Caco-2 (cell line): ENCODE measurements at regions of chr7 and their contacts with region 1.

Region 1: GRCh38 chr7:17706734-17707133 is 233.6 kb downstream of the SNX13 start:
- DNase-seq: peak; percentile 63 to 68
- H3K4me3 ChIP-seq: no peak overlapping the region
- H3K4me3 Mint-ChIP-seq: no peak overlapping the region
- H3K27ac Mint-ChIP-seq: no peak overlapping the region
- H3K4me1 ChIP-seq: no peaks in the 10 kb centered on the region
- H3K4me1 Mint-ChIP-seq: no peaks in the 10 kb centered on the region
- H3K27me3 ChIP-seq: peaks cover 1% of the 10 kb centered on the region; the same call in 1 of the 2 replicates
- H3K27me3 Mint-ChIP-seq: peaks cover 5% of the 10 kb centered on the region
- CTCF ChIP-seq: peak; percentile 78 to 80

Region 2: DNA sequence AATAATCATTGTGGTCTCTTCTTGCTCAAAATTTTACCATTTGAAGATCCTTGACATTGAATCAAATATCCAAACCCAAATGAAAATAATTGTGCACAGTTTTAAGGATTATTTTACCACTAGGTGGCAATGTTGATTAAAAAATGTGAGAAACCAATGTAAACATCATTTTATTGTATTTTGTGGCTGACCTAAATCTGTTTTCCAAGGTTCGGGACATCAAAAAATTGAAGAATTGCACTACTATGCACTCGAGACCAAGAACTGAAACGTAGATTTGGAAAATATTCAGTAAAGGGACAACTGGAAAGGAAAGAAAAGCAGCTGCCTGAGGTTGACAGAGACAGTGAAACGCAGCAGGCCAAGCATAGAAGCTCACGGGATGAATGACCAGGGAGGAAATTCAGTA is 25.8 kb before region 1 on chr7:
- CTCF ChIA-PET with region 1: interaction called, 4 read pairs
- POLR2A ChIA-PET with region 1: no interaction called
- intact Hi-C with region 1: loop called (anchors 1 kb)
- DNase-seq: peak in 1 of 2 experiments; percentile 15
- H3K4me3 ChIP-seq: no peak overlapping the region
- H3K4me3 Mint-ChIP-seq: no peak overlapping the region
- H3K27ac Mint-ChIP-seq: no peak overlapping the region
- H3K4me1 ChIP-seq: peaks cover 20% of the 10 kb centered on the region
- H3K4me1 Mint-ChIP-seq: peaks cover 10% of the 10 kb centered on the region
- H3K27me3 ChIP-seq: no peaks in the 10 kb centered on the region
- H3K27me3 Mint-ChIP-seq: no peaks in the 10 kb centered on the region
- CTCF ChIP-seq: peak; percentile 9 to 64

Region 3: GRCh38 chr7:17940302-17940883 is 233.7 kb after region 1 on chr7 and contains the start of gene SNX13:
- CTCF ChIA-PET with region 1: no interaction called
- POLR2A ChIA-PET with region 1: no interaction called
- intact Hi-C with region 1: loop called (anchors 10 kb)
- DNase-seq: peak; percentile 95 to 96
- H3K4me3 ChIP-seq: peak within 1 kb of the TSS; percentile 99
- H3K4me3 Mint-ChIP-seq: peak within 1 kb of the TSS; percentile 100
- H3K27ac Mint-ChIP-seq: peak within 1 kb of the TSS; percentile 100
- H3K4me1 ChIP-seq: 0 out of 2 replicates have a peak, but pooled peaks cover 8% of the 10 kb centered on the region
- H3K4me1 Mint-ChIP-seq: peaks cover 24% of the 10 kb centered on the region
- H3K27me3 ChIP-seq: no peaks in the 10 kb centered on the region
- H3K27me3 Mint-ChIP-seq: no peaks in the 10 kb centered on the region
- CTCF ChIP-seq: peak; percentile 25 to 27
- total RNA-seq, gene SNX13: 36.6 and 41.8 TPM in 2 replicates

Region 4: DNA sequence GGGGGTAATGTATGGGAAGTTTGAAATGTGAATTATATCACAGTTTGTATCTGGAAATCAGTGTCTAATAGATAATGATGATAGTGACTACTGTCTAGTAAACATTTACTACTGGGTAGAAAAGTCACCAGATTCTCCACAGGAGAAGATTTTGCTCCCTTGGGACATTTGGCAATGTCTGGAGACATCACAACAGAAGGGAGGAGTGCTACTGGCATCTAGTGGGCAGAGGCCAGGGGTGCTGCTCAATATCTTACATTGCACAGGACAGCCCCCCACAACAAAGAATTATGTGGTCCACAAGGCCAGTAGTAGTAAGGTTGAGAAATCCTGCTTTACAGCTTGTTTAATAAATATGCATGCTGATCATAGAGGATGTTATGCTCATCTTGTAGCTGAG is 413.3 kb after region 1 on chr7:
- CTCF ChIA-PET with region 1: no interaction called
- POLR2A ChIA-PET with region 1: no interaction called
- intact Hi-C with region 1: loop called (anchors 1 kb)
- DNase-seq: no peak
- H3K4me3 ChIP-seq: no peak overlapping the region
- H3K4me3 Mint-ChIP-seq: no peak overlapping the region
- H3K27ac Mint-ChIP-seq: no peak overlapping the region
- H3K4me1 ChIP-seq: no peaks in the 10 kb centered on the region
- H3K4me1 Mint-ChIP-seq: no peaks in the 10 kb centered on the region
- H3K27me3 ChIP-seq: no peaks in the 10 kb centered on the region
- H3K27me3 Mint-ChIP-seq: peaks cover 5% of the 10 kb centered on the region
- CTCF ChIP-seq: peak; percentile 14 to 17

Region 5: GRCh38 chr7:18320971-18321567 is 614.3 kb after region 1 on chr7:
- CTCF ChIA-PET with region 1: interaction called, 5 read pairs
- POLR2A ChIA-PET with region 1: no interaction called
- intact Hi-C with region 1: loop called (anchors 2 kb)
- DNase-seq: peak in 1 of 2 experiments; percentile 28
- H3K4me3 ChIP-seq: no peak overlapping the region
- H3K4me3 Mint-ChIP-seq: no peak overlapping the region
- H3K27ac Mint-ChIP-seq: no peak overlapping the region
- H3K4me1 ChIP-seq: no peaks in the 10 kb centered on the region
- H3K4me1 Mint-ChIP-seq: no peaks in the 10 kb centered on the region
- H3K27me3 ChIP-seq: no peaks in the 10 kb centered on the region; the same call in 1 of the 2 replicates
- H3K27me3 Mint-ChIP-seq: peaks cover 7% of the 10 kb centered on the region
- CTCF ChIP-seq: peak; percentile 45 to 73